ENCODE measurements at regions of chr4 and their contacts with region 1.

Region 1: DNA sequence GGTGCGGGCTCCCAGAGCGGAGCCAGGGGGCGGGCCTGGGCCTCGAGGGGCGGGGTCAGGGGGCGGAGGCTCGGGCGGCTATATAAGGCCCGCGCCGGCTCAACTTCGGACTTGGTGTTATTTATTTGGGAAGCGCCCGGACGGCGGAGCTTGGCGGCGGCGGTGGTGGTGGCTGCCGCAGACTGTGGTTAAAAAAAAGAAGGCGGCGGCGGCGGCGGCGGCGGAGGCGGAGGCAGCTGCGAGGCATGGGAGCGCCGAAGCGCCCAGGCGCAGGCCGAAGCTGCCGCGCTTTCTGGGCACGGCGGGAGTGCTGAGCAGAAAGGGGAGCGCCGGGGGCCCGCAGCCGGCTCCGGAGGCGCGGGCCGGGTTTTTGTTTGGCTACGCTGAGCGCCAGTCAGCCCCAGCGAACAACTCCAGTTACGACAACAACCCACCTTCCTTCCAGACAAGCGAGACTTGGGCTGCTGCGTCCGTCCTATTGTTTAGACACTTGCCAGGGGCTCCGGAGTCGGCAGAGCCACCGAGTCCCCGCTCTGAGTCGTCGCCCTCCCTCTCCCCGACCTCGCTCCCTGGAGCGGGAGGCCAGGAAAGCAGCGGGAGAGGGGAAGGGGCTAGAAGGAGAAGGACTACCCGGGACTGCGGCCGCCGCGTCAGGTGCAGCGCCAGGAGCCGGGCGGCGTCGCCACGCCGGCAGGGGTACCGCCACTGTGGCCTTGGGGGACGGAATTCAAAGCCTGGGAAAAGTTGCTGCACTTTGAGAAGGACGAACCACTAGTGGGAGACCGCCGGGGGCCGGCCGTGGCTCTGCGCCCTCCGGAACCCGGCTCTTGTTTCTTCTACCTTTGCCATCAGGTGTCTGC is at the start of gene SLIT2:
- DNase-seq: peak; percentile 47
- ATAC-seq: peak; percentile 97
- H3K4me3 ChIP-seq: peak within 1 kb of the TSS; percentile 50 to 71 (median 60); a peak in 4 of 6 replicates
- H3K27ac ChIP-seq: no peak within 1 kb of the TSS
- H3K4me1 ChIP-seq: no peaks in the 10 kb centered on the region
- H3K27me3 ChIP-seq: 0 out of 5 replicates have a peak, but pooled peaks cover 1 to 6% of the 10 kb centered on the region in 2 experiments
- CTCF ChIP-seq: no peak
- EP300 ChIP-seq: no peak
- POLR2A ChIP-seq: no peak
- RAD21 ChIP-seq: peak; percentile 15; the same call in 1 of the 2 replicates
- total RNA-seq, gene SLIT2: 0.03 TPM in 1 of 2 replicates, not detected in the other

Region 2: DNA sequence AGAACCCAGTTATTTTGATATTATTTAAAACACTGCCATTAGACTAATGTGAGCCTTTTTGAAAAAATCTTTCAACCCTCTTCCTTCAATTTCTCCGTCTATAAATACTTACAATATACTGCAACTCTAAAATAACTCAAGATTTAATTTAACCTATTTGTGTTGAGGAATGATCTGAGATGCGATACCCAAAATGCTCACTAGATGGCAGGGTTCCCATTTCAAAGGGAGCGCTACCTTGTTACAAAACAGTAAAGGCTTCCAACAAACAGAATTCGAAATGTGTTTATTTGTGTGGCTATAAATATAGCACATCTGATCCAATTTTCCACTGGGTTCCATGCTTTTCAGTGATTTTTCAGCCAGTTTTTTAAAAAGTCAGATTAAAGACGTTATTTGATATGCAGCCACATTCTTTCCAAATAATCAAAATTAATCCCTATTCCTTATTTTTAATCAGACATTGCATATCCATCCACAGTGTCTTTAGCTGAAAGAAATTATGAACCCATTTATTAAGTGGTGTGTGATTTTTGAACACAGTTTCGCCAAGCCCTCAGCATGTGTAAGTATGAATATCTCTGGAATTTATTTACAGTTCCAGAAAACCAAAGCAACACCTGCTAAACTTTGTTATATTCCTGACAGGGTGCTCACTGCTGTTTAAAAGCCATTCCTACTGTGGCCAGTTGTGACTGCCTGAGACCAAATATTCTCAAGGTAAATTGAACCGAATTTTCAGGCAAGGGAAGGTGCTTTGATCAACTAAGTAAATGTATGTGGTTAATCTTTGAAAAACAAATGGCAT is 1562.5 kb before region 1 on chr4:
- CTCF ChIA-PET with region 1: no interaction called
- POLR2A ChIA-PET with region 1: no interaction called
- in situ Hi-C with region 1: loop called (anchors 25 kb)
- intact Hi-C with region 1: loop called (anchors 2 kb)
- DNase-seq: peak; percentile 16
- ATAC-seq: no peak; the same call in 2 of the 3 replicates
- H3K4me3 ChIP-seq: no peak overlapping the region
- H3K27ac ChIP-seq: no peak overlapping the region
- H3K4me1 ChIP-seq: peaks cover 13% of the 10 kb centered on the region; the same call in 1 of the 2 replicates
- H3K27me3 ChIP-seq: no peaks in the 10 kb centered on the region
- CTCF ChIP-seq: peak; percentile 71
- EP300 ChIP-seq: no peak
- POLR2A ChIP-seq: no peak
- RAD21 ChIP-seq: peak; percentile 45; the same call in 1 of the 2 replicates

Region 3: GRCh38 chr4:19224820-19225219 is 1027.2 kb before region 1 on chr4:
- CTCF ChIA-PET with region 1: no interaction called
- POLR2A ChIA-PET with region 1: no interaction called
- in situ Hi-C with region 1: no loop called
- intact Hi-C with region 1: loop called (anchors 10 kb)
- DNase-seq: no peak
- ATAC-seq: no peak
- H3K4me3 ChIP-seq: no peak overlapping the region
- H3K27ac ChIP-seq: no peak overlapping the region
- H3K4me1 ChIP-seq: no peaks in the 10 kb centered on the region
- H3K27me3 ChIP-seq: no peaks in the 10 kb centered on the region
- CTCF ChIP-seq: 0 out of 2 replicates have a peak, but pooled peaks have one; percentile 10
- EP300 ChIP-seq: no peak
- POLR2A ChIP-seq: no peak
- RAD21 ChIP-seq: no peak

Region 4: DNA sequence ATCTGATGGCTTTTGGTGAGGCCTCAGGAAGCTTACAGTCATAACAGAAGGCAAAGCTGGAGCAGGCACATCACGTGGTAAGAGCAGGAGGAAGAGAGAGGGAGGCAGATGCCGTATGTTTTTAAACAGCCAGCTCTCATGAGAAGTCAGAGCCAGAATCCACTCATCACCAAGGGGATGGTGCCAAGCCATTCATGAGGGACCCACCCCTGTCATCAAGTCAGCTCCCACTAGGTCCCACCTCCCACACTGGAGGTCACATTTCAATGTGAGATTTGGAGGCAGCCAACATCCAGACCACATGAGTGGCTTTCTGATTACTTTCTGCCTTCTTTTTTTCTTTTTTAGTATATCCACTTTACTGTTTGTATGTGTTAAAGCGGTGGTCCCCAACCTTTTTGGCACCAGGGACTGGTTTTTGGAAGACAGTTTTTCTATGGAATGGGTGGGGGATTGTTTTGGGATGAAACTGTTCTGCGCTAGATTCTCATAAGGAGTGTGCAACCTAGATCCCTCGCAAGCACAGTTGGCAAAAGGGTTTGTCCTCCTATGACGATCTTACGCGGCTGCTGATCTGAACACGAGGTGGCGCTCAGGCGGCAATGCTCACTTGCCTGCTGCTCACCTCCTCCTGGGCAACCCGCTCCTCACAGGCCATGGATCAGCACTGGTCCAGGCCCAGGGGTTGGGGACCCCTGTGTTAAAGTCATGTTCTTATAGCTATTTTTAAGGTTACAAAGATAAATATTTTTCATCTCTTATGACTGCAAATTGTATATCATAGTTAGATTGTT is 61.4 kb after region 1 on chr4:
- CTCF ChIA-PET with region 1: no interaction called
- POLR2A ChIA-PET with region 1: no interaction called
- in situ Hi-C with region 1: no loop called
- intact Hi-C with region 1: no loop called
- DNase-seq: peak; percentile 21
- ATAC-seq: peak; percentile 100
- H3K4me3 ChIP-seq: no peak overlapping the region
- H3K27ac ChIP-seq: no peak overlapping the region
- H3K4me1 ChIP-seq: no peaks in the 10 kb centered on the region
- H3K27me3 ChIP-seq: no peaks in the 10 kb centered on the region
- CTCF ChIP-seq: peak; percentile 69
- EP300 ChIP-seq: no peak
- POLR2A ChIP-seq: no peak
- RAD21 ChIP-seq: no peak

Measured in HepG2 (cell line).